ENCODE measurements at regions of chr3 and their contacts with region 1.

Region 1: DNA sequence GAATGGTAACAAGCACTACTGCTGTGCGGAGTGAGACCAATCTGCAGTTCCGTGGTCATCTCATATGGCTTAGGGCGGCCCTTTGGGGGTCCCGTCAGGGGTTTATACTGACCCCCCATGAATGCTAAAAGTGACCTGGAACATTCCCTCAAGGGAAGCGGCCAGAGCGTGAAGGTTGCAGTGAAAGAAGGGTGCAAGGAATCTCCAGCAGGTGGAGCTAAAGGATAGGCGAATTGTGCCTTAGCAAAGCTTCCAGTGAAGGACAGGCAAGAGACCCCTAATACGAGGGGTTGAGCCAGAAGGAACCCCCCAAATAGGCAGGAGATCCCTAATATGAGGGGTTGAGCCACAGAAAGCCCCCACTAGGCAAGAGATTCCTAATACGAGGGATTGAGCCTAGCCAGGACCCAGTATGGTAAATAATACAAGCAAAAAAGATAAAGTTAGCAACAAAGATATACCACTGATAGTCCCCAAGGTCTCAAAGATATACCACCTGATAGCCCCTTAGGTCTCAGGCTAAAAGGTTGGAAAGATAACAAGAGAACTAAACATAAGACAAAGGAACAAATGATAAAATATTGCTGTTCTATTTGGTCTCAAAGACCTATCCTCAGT is 32.8 kb downstream of the ZNF589 start:
- DNase-seq: no peak

Region 2: DNA sequence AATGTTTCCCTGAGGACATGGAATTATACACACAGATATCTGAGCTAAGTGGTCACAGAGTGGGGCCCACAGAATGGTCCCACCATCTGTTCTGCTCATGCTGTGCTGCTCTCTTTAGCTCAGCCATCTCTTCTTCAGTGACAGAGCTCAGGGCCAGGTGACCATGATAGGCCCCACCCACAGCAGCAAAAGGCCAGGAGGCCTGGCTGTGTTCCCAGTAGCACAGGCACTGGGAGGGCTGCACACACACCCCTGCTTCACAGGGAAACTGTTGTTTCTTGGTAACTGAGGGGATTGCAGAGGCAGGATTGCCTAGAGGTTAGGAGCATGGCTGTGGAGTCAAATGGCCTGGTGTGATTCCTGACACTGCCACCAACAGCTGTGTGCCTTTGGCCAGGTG is 93.5 kb after region 1 on chr3:
- intact Hi-C with region 1: no loop called
- DNase-seq: no peak

Region 3: GRCh38 chr3:48439820-48440589 is 166.3 kb after region 1 on chr3 and contains the starts of genes CCDC51 and TMA7:
- intact Hi-C with region 1: loop called (anchors 5 kb)
- DNase-seq: peak; percentile 99
- total RNA-seq, gene CCDC51: 13.0 to 16.2 TPM
- total RNA-seq, gene TMA7: 112 to 178 TPM

Region 4: DNA sequence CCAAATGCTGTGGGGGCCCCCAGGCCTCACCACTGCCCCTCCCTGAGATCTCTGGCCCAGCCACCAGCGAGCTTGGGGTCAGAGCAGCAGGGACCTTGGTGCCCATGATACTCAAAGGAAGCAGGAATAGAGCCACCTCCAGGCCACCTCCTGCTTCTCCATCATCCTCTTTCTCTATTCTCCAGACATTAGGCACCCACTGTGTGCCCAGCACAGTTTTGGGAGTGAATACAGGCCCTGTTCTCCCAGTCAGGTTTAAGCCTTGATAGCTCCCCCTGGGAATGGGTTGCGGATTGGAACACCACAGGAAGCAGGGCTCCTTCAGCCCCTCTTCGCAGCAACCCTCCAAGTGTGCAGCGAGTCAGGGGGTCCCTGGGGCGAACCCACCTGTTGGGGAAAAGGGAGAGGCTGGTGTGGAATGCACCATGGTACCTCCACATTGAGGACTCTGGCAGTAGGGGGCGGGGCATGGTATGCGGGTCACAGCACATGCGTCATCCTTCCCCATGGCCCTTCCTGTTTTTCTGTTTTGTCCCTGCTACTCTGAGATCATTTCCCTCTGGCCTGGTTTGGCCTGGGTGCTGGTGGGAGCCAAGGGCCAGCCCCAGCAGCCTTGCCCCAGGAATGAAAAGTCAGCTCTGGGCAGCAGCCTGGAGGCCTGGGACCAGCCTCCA is 1981.0 kb after region 1 on chr3:
- intact Hi-C with region 1: loop called in 1 of 2 experiments (anchors 5 kb)
- DNase-seq: peak; percentile 92